ENCODE measurements at regions of chr6 and their contacts with region 1.

Region 1: GRCh38 chr6:36131511-36132245 is 1.4 kb downstream of the MAPK13 start:
- DNase-seq: peak in 4 of 10 donors; percentile 22 to 50 (median 48)
- ATAC-seq: peak; percentile 63 to 73
- H3K4me3 Mint-ChIP-seq: peak overlapping the region; percentile 83 to 94 (median 88)
- H3K27ac Mint-ChIP-seq: peak overlapping the region; percentile 75 to 96 (median 95)
- H3K4me1 Mint-ChIP-seq: peaks cover 23 to 67% (median 46%) of the 10 kb centered on the region in 4 donors
- H3K27me3 Mint-ChIP-seq: no peaks in the 10 kb centered on the region

Region 2: DNA sequence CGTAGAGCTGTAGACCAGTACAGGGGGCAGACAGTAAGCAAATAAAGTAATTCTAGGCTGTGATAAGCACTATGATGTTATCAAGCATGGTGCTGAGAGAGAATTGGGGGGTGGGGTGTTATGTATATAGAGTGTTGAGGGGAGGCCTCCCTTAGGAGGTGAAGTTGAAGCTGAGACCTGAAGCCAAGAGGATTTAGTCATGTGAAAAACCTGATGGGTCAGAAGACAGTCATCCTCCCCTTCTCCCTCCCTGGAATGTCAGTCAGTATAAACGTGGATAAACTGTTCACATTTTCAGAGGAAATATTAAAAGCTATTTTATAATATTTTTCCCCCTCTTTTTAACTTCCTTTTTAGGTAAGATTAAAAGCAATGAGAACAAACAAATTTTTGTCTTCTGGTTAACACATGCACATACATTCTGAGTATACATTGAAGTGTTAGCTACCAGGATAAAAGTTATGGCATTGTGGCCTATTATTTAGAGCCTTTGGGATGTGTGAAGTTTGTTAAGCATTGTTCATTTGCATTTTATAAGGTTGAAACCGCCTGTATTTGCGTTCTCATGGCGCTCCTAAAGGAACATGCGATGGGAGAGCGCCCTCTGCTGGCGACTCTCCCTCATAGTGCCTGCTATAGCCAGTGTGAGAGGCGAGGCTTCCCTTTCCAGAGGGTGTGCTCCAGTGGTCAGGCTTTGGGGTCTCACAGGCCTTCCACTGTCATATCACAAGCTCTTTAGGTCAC is 36.8 kb before region 1 on chr6:
- POLR2A ChIA-PET with region 1: interaction called, 12 read pairs
- DNase-seq: peak; percentile 61 to 86 (median 78)
- ATAC-seq: peak; percentile 68 to 82
- H3K4me3 Mint-ChIP-seq: no peak overlapping the region
- H3K27ac Mint-ChIP-seq: peak overlapping the region; percentile 63 to 92 (median 78)
- H3K4me1 Mint-ChIP-seq: peaks cover 11 to 40% (median 30%) of the 10 kb centered on the region in 4 donors
- H3K27me3 Mint-ChIP-seq: no peaks in the 10 kb centered on the region

Region 3: GRCh38 chr6:36109092-36109491 is 22.6 kb before region 1 on chr6:
- POLR2A ChIA-PET with region 1: interaction called, 11 read pairs
- DNase-seq: peak in 8 of 10 donors; percentile 43 to 87 (median 67)
- ATAC-seq: peak; percentile 94 to 96
- H3K4me3 Mint-ChIP-seq: peak overlapping the region; percentile 19 to 80 (median 50)
- H3K27ac Mint-ChIP-seq: peak overlapping the region; percentile 91 to 98 (median 96)
- H3K4me1 Mint-ChIP-seq: peaks cover 21 to 73% (median 52%) of the 10 kb centered on the region in 4 donors
- H3K27me3 Mint-ChIP-seq: no peaks in the 10 kb centered on the region

Region 4: DNA sequence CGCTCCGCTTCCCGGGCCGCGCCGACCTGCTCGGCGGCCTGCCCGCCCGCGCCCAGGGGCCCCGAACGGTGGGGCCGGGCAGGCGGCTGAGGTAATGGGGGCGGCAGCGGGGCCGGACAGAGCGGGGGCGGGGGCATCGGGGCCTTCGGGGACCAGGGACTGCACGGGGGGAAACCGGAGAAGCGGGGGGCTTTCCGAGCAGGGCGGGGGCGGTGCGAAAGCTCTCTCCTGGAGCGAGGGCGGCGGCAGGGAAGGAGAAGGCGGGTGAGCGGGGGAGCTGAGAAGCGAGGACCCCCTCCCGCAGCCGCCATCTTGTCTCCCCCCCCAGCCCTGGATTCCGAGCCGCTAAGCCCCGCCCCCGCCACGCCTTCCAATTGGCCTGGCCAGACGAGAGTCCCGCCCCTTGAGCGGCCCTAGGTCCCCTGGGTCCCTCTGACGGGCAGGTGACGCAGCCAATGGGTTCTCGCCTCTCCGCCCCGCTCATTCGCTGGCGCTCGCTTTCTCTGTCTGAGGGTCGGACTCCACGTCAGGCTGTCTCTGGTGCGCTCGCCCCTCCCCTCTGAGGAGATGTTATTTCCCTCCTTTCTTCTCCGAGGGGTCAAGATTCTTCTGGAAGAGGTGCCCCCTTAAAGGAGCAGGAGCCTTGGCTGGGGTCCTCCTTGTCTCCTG is 65.3 kb after region 1 on chr6:
- POLR2A ChIA-PET with region 1: interaction called, 15 read pairs
- DNase-seq: peak; percentile 98 to 100 (median 99)
- ATAC-seq: peak; percentile 86 to 88
- H3K4me3 Mint-ChIP-seq: peak overlapping the region; percentile 87 to 96 (median 91)
- H3K27ac Mint-ChIP-seq: peak overlapping the region; percentile 89 to 97 (median 94)
- H3K4me1 Mint-ChIP-seq: peaks cover 23 to 57% (median 52%) of the 10 kb centered on the region in 4 donors
- H3K27me3 Mint-ChIP-seq: no peaks in the 10 kb centered on the region

Region 5: DNA sequence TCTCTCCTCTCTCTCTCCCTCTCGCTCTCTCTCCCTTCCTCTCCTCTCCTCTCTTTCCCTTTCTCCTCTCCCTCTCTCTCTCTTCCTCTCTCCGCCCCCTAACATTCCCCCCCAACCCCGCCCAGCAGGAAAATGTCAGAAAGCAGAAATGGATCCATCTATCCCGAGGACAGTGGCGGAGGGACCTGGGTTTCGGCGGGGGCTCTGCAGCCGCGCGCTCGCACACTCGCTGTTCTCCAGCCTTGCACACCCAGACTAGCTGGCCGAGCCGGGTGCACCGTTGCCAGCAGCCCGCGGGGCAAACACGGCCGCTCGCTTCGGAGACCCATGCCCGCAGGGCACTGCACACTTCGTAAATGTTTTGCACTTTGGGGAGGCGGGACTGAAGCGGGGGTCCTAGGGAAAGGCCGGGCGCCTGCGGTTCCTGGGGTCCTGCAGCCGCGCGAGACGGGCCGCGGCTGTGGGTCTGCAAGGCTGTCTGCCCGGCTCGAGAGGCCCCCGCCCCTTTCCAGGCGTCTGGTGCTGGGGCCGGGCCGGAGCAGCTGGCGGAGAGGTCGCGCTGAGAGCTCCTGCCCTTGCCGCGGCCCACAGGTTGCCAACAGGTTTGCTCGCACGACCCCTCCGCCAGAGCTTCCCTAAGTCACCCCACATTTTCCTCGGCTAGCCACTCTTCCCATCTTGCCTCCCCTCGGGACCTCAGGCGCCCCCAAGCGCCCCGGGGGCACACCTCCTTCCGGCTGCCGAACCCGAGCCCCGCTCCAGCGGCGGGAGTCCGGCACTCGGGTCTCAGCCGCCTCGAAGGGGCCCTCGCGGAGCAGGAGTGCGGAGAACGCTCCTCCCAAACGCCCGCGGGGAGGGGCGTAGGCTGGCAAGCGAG is 1566.8 kb after region 1 on chr6:
- POLR2A ChIA-PET with region 1: no interaction called
- DNase-seq: peak; percentile 20 to 82 (median 56)
- ATAC-seq: peak; percentile 26 to 63
- H3K4me3 Mint-ChIP-seq: peak overlapping the region; percentile 88 to 100 (median 99)
- H3K27ac Mint-ChIP-seq: peak overlapping the region; percentile 94 to 100 (median 98)
- H3K4me1 Mint-ChIP-seq: peaks cover 23 to 37% (median 25%) of the 10 kb centered on the region in 4 donors
- H3K27me3 Mint-ChIP-seq: peaks cover 16 to 61% (median 29%) of the 10 kb centered on the region in 5 donors

Measured in naive thymus-derived CD8-positive, alpha-beta T cell (primary cell).